Activated CD4-positive, alpha-beta memory T cell treated with anti-CD3 and anti-CD28 coated beads for 36 hours (primary cell): ENCODE measurements at regions of chr18 and their contacts with region 1.

Region 1: DNA sequence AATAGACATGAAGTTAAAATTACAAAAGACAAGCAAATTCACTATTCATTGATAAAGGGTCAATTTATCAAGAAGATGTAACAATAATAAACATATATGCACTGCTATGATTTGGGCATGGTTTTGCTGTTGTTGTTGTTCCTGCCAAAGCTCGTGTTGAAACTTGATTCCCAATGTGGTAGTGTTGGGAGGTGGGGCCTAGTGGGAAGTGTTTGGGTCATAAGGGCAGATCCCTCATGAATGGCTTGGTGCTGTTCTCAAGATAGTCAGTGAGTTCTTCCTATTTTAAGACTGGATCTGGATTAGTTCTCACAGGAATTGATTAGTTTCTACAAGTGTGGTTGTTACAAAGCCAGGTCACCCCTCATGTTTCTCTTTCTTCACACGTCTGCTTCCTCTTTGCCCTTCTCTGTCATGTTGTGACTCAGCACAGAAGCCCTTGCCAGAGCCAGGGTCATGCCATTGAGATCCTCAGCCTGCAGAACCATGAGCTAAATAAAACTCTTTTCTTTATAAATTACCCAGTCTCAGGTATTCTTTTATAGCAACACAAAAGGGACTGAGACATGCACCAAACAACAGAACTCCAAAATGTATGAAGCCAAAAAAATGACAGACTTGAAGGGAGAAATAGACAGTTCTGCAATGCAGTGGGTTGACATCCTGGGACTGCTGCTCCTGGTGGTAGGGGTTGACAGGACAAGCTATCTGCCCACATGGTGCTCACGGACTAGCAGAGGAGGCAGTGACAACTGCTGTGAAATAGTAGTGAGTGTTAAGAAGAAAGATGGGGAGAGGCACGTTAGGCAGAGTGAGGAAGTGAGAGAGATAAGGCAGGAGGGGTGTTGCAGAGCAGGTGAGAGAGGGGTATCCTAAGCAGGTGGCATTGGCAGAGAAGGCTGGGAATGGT is 18.6 kb upstream of the SKA1 start:
- DNase-seq: no peak
- H3K4me3 Mint-ChIP-seq: no peak overlapping the region
- H3K27ac Mint-ChIP-seq: no peak overlapping the region
- H3K4me1 Mint-ChIP-seq: peaks cover 10% of the 10 kb centered on the region
- H3K27me3 Mint-ChIP-seq: peaks cover 14% of the 10 kb centered on the region

Region 2: GRCh38 chr18:50194631-50195532 is 161.4 kb before region 1 on chr18 and contains the start of gene MYO5B:
- CTCF ChIA-PET with region 1: interaction called, 13 read pairs
- POLR2A ChIA-PET with region 1: no interaction called
- intact Hi-C with region 1: no loop called
- DNase-seq: peak; percentile 63
- H3K4me3 Mint-ChIP-seq: no peak within 1 kb of the TSS
- H3K27ac Mint-ChIP-seq: no peak within 1 kb of the TSS
- H3K4me1 Mint-ChIP-seq: peaks cover 17% of the 10 kb centered on the region
- H3K27me3 Mint-ChIP-seq: peaks cover 51% of the 10 kb centered on the region
- total RNA-seq, gene MYO5B: 0.02 to 0.21 TPM

Region 3: GRCh38 chr18:50218432-50219197 is 137.7 kb before region 1 on chr18:
- CTCF ChIA-PET with region 1: interaction called, 82 read pairs
- POLR2A ChIA-PET with region 1: no interaction called
- intact Hi-C with region 1: loop called (anchors 1 kb)
- DNase-seq: peak; percentile 38
- H3K4me3 Mint-ChIP-seq: no peak overlapping the region
- H3K27ac Mint-ChIP-seq: no peak overlapping the region
- H3K4me1 Mint-ChIP-seq: no peaks in the 10 kb centered on the region
- H3K27me3 Mint-ChIP-seq: peaks cover 18% of the 10 kb centered on the region

Region 4: GRCh38 chr18:50287441-50288347 is 68.6 kb before region 1 on chr18 and contains the start of gene CXXC1:
- CTCF ChIA-PET with region 1: interaction called, 11 read pairs
- POLR2A ChIA-PET with region 1: no interaction called
- intact Hi-C with region 1: loop called (anchors 5 kb)
- DNase-seq: peak; percentile 98
- H3K4me3 Mint-ChIP-seq: peak within 1 kb of the TSS; percentile 88
- H3K27ac Mint-ChIP-seq: peak within 1 kb of the TSS; percentile 100
- H3K4me1 Mint-ChIP-seq: peaks cover 28% of the 10 kb centered on the region
- H3K27me3 Mint-ChIP-seq: no peaks in the 10 kb centered on the region
- total RNA-seq, gene CXXC1: 80.8 to 80.9 TPM

Region 5: GRCh38 chr18:50331691-50332090 is 24.6 kb before region 1 on chr18:
- CTCF ChIA-PET with region 1: interaction called, 14 read pairs
- POLR2A ChIA-PET with region 1: no interaction called
- intact Hi-C with region 1: no loop called
- DNase-seq: no peak
- H3K4me3 Mint-ChIP-seq: no peak overlapping the region
- H3K27ac Mint-ChIP-seq: no peak overlapping the region
- H3K4me1 Mint-ChIP-seq: no peaks in the 10 kb centered on the region
- H3K27me3 Mint-ChIP-seq: peaks cover 13% of the 10 kb centered on the region

Region 6: DNA sequence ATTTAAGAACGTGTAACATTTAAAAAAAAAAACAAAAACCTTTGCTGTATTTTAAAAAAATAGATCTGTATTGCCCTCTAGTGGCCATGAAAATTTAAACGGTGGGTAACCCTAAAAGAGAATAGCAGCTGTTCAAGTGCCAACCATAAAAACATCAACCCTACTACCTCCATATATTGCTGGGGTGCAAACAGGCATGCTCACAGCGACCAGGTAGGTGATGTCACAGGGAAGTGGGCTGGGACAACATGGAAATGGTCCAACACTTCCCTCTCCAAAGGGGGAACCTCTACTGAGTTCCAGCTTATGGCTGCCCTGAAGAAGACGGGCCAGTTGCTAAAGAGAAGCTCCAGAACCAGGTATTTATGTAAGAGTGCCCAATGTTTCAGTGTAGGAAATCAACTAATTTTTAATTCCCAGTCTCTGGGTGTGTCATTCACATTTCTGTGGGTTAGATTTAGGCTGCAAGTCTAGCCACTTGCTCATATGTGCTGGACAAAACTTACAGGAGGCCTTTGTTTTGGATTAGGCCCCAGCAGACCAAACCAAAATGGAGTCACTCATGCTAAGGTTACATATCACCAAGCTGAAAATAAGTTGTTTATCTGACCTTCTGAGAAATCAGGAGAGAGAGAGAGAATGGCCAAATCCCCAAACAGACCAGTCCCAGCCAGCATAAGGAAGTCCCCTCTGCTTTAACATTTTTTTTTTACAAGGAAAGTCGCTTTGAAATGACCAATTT is 73.1 kb after region 1 on chr18:
- CTCF ChIA-PET with region 1: interaction called, 20 read pairs
- POLR2A ChIA-PET with region 1: no interaction called
- intact Hi-C with region 1: loop called (anchors 1 kb)
- DNase-seq: no peak
- H3K4me3 Mint-ChIP-seq: no peak overlapping the region
- H3K27ac Mint-ChIP-seq: no peak overlapping the region
- H3K4me1 Mint-ChIP-seq: no peaks in the 10 kb centered on the region
- H3K27me3 Mint-ChIP-seq: peaks cover 14% of the 10 kb centered on the region

Region 7: GRCh38 chr18:50614838-50615237 is 258.5 kb after region 1 on chr18:
- CTCF ChIA-PET with region 1: no interaction called
- POLR2A ChIA-PET with region 1: no interaction called
- intact Hi-C with region 1: no loop called
- DNase-seq: no peak
- H3K4me3 Mint-ChIP-seq: no peak overlapping the region
- H3K27ac Mint-ChIP-seq: no peak overlapping the region
- H3K4me1 Mint-ChIP-seq: no peaks in the 10 kb centered on the region
- H3K27me3 Mint-ChIP-seq: peaks cover 4% of the 10 kb centered on the region

Region 8: DNA sequence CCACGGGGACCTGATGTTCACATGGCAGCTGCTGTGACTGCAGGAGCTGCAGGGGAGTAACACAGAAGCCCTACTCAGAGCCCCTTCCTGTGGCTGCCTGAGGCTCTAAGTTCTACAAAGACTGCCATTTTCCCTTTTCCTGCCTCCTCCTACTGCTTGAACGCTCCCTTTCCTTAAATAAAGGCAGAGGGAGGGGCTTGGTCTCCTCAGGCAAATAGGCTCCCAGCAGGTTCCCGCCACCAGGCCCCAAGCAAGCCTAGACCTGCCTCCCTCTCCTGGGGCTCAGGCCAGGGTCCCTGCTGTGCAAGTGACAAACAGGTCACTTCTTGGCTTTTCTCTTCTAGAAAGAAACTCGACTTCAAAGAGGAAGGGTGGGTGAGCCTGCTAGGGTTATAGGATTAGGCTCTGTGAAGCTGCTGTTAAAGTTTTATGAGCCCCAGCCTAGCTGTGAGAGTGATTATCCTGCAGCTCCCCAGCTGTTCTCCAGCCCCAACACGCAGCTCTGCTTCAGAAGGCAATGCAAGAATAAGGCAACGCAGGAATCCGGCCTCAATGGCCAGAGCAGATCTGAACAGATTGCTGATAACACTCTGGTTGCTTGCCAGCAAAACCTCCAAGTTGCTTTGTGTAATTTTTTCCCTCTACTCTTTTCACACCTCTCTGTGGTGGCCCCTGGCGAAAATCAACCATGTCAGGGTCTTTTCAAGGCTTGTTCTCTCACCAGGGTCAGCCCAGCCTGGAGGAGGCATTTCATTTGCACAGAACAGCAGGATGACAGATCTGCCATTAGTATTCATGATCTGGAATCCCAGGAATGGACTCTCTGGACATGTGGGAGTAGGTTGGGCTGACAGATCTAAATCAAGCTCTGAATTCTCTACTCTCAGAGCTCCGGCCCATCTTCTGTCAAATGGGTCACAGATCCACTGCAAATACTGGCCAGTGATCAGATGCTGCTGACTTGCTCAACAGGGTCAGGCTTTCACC is 392.2 kb after region 1 on chr18:
- CTCF ChIA-PET with region 1: no interaction called
- POLR2A ChIA-PET with region 1: no interaction called
- intact Hi-C with region 1: no loop called
- DNase-seq: no peak
- H3K4me3 Mint-ChIP-seq: no peak overlapping the region
- H3K27ac Mint-ChIP-seq: no peak overlapping the region
- H3K4me1 Mint-ChIP-seq: no peaks in the 10 kb centered on the region
- H3K27me3 Mint-ChIP-seq: peaks cover 18% of the 10 kb centered on the region